ENCODE measurements at regions of chr5 and their contacts with region 1.

Region 1: DNA sequence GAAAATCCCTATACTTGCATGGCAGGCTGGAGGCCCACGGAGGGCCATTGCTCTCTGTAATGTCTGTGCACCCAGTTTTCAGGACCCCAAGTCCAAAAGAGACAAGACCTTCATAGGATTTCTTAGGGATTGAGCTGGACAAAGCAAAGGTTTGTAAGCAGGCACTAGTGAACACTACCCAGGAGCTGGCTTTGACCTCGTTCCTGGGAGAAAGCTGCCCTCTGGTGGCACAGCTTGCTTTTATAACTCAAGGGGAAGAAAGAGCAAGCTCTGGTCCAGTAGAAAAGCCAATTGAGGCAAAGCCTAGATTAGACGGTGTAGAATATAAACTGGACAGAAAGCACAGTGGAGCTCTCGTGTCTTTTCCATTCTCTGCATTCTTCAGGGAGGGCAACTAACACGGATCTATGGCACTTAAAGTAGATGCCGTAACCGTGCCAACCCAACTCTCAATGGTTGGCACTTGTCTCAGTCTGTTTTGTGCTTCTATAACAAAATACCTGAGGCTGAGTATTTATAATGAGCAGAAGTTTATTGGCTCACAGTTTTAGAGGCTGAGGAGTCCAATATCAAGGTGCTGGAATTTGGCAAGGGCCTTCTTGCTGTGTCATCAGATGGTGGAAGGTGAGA is 7.9 kb downstream of the GABRP start:
- DNase-seq: peak; percentile 40
- H3K4me3 Mint-ChIP-seq: no peak overlapping the region
- H3K27ac Mint-ChIP-seq: no peak overlapping the region
- H3K4me1 Mint-ChIP-seq: no peaks in the 10 kb centered on the region
- H3K27me3 Mint-ChIP-seq: peaks cover 3% of the 10 kb centered on the region

Region 2: GRCh38 chr5:170584450-170585058 is 206.9 kb before region 1 on chr5:
- CTCF ChIA-PET with region 1: no interaction called
- DNase-seq: no peak
- H3K4me3 Mint-ChIP-seq: no peak overlapping the region
- H3K27ac Mint-ChIP-seq: no peak overlapping the region
- H3K4me1 Mint-ChIP-seq: no peaks in the 10 kb centered on the region
- H3K27me3 Mint-ChIP-seq: peaks cover 25% of the 10 kb centered on the region

Region 3: DNA sequence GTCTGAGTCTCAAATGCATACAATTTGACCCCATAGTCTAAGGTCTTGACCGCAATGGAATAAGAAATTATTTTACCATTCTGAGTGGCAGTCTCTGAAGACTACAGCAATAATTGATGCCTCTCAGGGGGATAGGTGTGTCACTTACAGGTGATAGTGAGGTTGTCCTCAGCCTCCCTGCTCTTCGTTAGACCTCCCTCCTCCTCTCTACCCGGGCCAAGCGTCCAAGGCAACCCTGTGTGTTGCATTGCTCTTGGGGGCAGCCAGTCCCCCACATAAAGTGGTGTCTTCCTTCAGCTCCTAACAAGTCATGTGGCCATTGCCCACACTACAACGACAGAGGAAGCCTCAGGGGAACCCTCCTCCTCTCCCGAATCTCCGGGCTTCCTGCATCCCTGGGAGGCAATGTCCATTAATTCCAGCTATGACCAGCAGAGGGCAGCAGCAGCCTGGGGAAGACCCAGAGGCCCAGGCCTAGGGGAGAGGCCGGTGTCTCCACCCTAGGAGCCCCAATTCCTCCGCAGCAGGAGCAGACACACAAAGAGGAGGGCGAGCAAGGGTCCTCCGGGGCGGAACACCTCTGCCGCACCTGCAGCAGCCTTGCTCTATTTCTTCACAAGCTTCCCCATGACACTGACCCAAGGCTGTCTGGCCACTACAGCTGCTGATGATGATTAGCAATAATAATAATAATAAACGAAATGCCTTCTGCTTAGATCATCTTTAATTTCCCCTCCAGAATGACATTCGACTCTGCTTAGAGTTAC is 152.8 kb before region 1 on chr5:
- CTCF ChIA-PET with region 1: interaction called, 25 read pairs
- DNase-seq: peak; percentile 76
- H3K4me3 Mint-ChIP-seq: no peak overlapping the region
- H3K27ac Mint-ChIP-seq: no peak overlapping the region
- H3K4me1 Mint-ChIP-seq: peaks cover 4% of the 10 kb centered on the region
- H3K27me3 Mint-ChIP-seq: peaks cover 26% of the 10 kb centered on the region

Region 4: GRCh38 chr5:170745481-170746071 is 45.9 kb before region 1 on chr5:
- CTCF ChIA-PET with region 1: interaction called, 22 read pairs
- DNase-seq: no peak
- H3K4me3 Mint-ChIP-seq: no peak overlapping the region
- H3K27ac Mint-ChIP-seq: no peak overlapping the region
- H3K4me1 Mint-ChIP-seq: peaks cover 3% of the 10 kb centered on the region
- H3K27me3 Mint-ChIP-seq: peaks cover 64% of the 10 kb centered on the region

Region 5: GRCh38 chr5:170809551-170809950 is 18.1 kb after region 1 on chr5:
- CTCF ChIA-PET with region 1: no interaction called
- DNase-seq: no peak
- H3K4me3 Mint-ChIP-seq: no peak overlapping the region
- H3K27ac Mint-ChIP-seq: no peak overlapping the region
- H3K4me1 Mint-ChIP-seq: no peaks in the 10 kb centered on the region
- H3K27me3 Mint-ChIP-seq: peaks cover 5% of the 10 kb centered on the region

Region 6: GRCh38 chr5:171080186-171080938 is 288.9 kb after region 1 on chr5:
- CTCF ChIA-PET with region 1: no interaction called
- DNase-seq: no peak
- H3K4me3 Mint-ChIP-seq: no peak overlapping the region
- H3K27ac Mint-ChIP-seq: no peak overlapping the region
- H3K4me1 Mint-ChIP-seq: no peaks in the 10 kb centered on the region
- H3K27me3 Mint-ChIP-seq: no peaks in the 10 kb centered on the region

Measured in activated naive CD4-positive, alpha-beta T cell treated with anti-CD3 and anti-CD28 coated beads, Interleukin-2, amount 10 ng/mL, durations not matched to agents 7 days and 5 days (primary cell).